ENCODE measurements at regions of chr9 and their contacts with region 1.

Region 1: DNA sequence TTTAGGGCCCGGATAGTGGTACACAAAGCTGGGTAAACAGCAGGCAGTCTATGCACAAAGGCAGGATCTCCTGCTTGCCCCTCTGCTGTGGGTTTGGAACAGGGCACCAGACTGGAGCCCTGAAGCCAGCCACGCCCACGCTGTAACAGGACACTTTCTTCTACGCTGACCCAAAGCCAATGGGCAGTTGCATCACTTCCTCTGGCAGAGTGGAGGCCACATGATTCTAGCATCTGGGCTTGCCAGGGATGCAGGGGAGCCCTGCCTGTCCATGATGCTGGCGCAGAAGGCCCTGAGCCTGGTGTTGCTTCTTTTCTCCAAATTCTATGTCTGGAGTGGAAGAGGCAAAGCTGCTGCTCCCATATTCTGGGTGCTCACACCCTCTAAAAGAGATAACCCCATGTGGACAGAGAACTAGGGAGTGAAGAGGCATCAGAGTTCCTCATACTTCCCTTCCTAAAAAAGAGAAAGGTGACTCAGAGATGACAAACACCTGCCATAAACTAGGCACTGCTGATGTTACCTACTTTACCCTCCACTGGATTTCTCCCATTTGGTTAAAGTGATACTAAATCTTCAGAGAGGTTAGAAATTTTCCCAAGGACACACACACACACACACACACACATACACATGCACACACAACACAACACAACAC is 260.3 kb upstream of the KLF4 start:
- DNase-seq: peak; percentile 94
- ATAC-seq: peak; percentile 94 to 95

Region 2: GRCh38 chr9:107489687-107490605 is 260.0 kb before region 1 on chr9 and contains the start of gene KLF4:
- intact Hi-C with region 1: loop called in 1 of 2 experiments (anchors 5 kb)
- DNase-seq: peak; percentile 93
- ATAC-seq: peak; percentile 83 to 88
- total RNA-seq, gene KLF4: 45.2 to 66.9 TPM

Region 3: DNA sequence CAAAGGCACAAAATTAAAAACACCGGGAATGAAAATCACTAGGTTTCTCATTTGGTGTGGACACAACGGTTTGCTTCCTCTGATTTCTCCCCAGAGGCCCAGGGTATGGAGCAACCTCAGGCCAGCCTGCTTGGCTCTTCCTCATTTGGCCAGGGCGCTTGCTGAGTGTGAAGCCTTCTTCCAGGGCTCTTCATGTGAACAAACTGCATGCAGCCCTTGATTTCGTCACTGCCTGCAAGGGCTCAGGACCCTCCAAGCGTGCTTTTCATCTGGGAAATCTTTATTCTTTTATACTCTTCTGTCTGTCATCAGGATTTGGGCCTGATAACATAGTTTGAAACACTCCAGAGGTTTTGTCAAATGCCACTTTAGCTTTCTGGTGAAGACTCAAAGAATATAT is 137.8 kb before region 1 on chr9:
- intact Hi-C with region 1: no loop called
- DNase-seq: peak; percentile 80
- ATAC-seq: peak; percentile 88 to 93

Region 4: GRCh38 chr9:108142504-108143201 is 392.7 kb after region 1 on chr9:
- intact Hi-C with region 1: no loop called
- DNase-seq: peak; percentile 87
- ATAC-seq: peak; percentile 97

Measured in left cardiac atrium (tissue), 4 donors.